GM12878 (cell line): ENCODE measurements at regions of chr3 and their contacts with region 1.

Region 1: GRCh38 chr3:26118165-26118564 is 328.3 kb downstream of the OXSM start:
- DNase-seq: no peak
- ATAC-seq: peak; percentile 72
- H3K4me3 ChIP-seq: no peak overlapping the region
- H3K27ac ChIP-seq: no peak overlapping the region
- H3K4me1 ChIP-seq: no peaks in the 10 kb centered on the region
- H3K27me3 ChIP-seq: no peaks in the 10 kb centered on the region
- CTCF ChIP-seq: peak; percentile 43 to 49 (median 44); a peak in 5 of 6 replicates
- EP300 ChIP-seq: no peak
- POLR2A ChIP-seq: no peak
- RAD21 ChIP-seq: peak; percentile 82

Region 2: GRCh38 chr3:25655659-25656058 is 462.5 kb before region 1 on chr3:
- CTCF ChIA-PET with region 1: no interaction called
- POLR2A ChIA-PET with region 1: no interaction called
- RAD21 ChIA-PET with region 1: no interaction called
- SMC1A ChIA-PET with region 1: no interaction called
- in situ Hi-C with region 1: loop called (anchors 10 kb)
- intact Hi-C with region 1: no loop called
- DNase-seq: no peak
- ATAC-seq: 0 out of 3 replicates have a peak, but pooled peaks have one; percentile 3
- H3K4me3 ChIP-seq: no peak overlapping the region
- H3K27ac ChIP-seq: no peak overlapping the region
- H3K4me1 ChIP-seq: peaks cover 2% of the 10 kb centered on the region; the same call in 1 of the 2 replicates
- H3K27me3 ChIP-seq: no peaks in the 10 kb centered on the region
- CTCF ChIP-seq: no peak
- EP300 ChIP-seq: no peak
- POLR2A ChIP-seq: no peak
- RAD21 ChIP-seq: no peak

Region 3: GRCh38 chr3:26068890-26069289 is 49.3 kb before region 1 on chr3:
- CTCF ChIA-PET with region 1: no interaction called
- POLR2A ChIA-PET with region 1: no interaction called
- RAD21 ChIA-PET with region 1: no interaction called
- SMC1A ChIA-PET with region 1: no interaction called
- in situ Hi-C with region 1: no loop called
- intact Hi-C with region 1: no loop called
- DNase-seq: no peak
- ATAC-seq: no peak
- H3K4me3 ChIP-seq: no peak overlapping the region
- H3K27ac ChIP-seq: no peak overlapping the region
- H3K4me1 ChIP-seq: no peaks in the 10 kb centered on the region
- H3K27me3 ChIP-seq: no peaks in the 10 kb centered on the region
- CTCF ChIP-seq: no peak
- EP300 ChIP-seq: no peak
- POLR2A ChIP-seq: no peak
- RAD21 ChIP-seq: no peak

Region 4: GRCh38 chr3:26091096-26091495 is 27.1 kb before region 1 on chr3:
- CTCF ChIA-PET with region 1: no interaction called
- POLR2A ChIA-PET with region 1: no interaction called
- RAD21 ChIA-PET with region 1: no interaction called
- SMC1A ChIA-PET with region 1: no interaction called
- in situ Hi-C with region 1: no loop called
- intact Hi-C with region 1: no loop called
- DNase-seq: no peak
- ATAC-seq: no peak
- H3K4me3 ChIP-seq: no peak overlapping the region
- H3K27ac ChIP-seq: no peak overlapping the region
- H3K4me1 ChIP-seq: no peaks in the 10 kb centered on the region
- H3K27me3 ChIP-seq: no peaks in the 10 kb centered on the region
- CTCF ChIP-seq: no peak
- EP300 ChIP-seq: no peak
- POLR2A ChIP-seq: no peak
- RAD21 ChIP-seq: no peak

Region 5: DNA sequence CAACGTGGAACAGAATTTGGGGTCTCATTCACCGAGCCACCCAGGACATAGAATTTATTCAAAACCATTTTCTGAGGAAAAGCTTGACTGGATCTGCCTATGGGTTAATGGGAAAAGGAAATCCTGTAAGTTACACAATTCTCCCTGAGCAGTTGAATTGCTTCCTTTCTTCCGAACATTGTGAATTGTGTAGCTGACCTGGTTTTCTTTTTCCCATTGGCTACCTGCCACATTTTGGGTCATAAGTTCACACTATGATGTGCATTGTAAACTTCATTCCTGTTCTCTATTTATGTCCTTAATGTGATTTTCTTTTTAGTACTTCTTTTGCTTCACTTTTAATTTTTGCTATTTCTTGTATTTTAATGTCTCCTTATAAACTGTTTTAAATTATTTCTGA is 118.4 kb after region 1 on chr3:
- CTCF ChIA-PET with region 1: no interaction called
- POLR2A ChIA-PET with region 1: no interaction called
- RAD21 ChIA-PET with region 1: no interaction called
- SMC1A ChIA-PET with region 1: no interaction called
- in situ Hi-C with region 1: no loop called
- intact Hi-C with region 1: no loop called
- DNase-seq: no peak
- ATAC-seq: no peak
- H3K4me3 ChIP-seq: no peak overlapping the region
- H3K27ac ChIP-seq: no peak overlapping the region
- H3K4me1 ChIP-seq: no peaks in the 10 kb centered on the region
- H3K27me3 ChIP-seq: no peaks in the 10 kb centered on the region
- CTCF ChIP-seq: no peak
- EP300 ChIP-seq: no peak
- POLR2A ChIP-seq: no peak
- RAD21 ChIP-seq: no peak